ENCODE measurements at regions of chr12 and their contacts with region 1.

Region 1: DNA sequence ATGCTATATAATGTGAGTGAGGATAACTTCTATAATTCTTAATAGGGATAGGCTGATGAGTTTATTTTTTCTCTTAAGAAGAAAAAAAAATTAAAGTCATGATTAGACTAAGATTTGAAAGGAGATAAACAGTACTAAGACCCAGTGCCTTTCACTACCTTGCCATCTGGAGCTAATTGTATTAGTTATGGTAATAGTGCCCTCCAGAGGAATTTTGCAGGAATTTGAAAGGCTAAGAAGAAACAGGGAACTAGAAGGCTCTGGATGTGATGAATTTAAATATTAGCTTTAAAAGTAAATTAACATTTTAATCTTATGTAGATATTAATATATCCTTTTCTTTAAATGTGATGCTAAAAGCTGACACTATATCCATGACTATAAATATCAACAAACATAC is 36.6 kb upstream of the PIK3C2G start:
- DNase-seq: no peak
- ATAC-seq: no peak
- H3K4me3 Mint-ChIP-seq: no peak overlapping the region
- H3K27ac Mint-ChIP-seq: no peak overlapping the region
- H3K4me1 Mint-ChIP-seq: no peaks in the 10 kb centered on the region
- H3K27me3 Mint-ChIP-seq: no peaks in the 10 kb centered on the region
- CTCF ChIP-seq: no peak

Region 2: DNA sequence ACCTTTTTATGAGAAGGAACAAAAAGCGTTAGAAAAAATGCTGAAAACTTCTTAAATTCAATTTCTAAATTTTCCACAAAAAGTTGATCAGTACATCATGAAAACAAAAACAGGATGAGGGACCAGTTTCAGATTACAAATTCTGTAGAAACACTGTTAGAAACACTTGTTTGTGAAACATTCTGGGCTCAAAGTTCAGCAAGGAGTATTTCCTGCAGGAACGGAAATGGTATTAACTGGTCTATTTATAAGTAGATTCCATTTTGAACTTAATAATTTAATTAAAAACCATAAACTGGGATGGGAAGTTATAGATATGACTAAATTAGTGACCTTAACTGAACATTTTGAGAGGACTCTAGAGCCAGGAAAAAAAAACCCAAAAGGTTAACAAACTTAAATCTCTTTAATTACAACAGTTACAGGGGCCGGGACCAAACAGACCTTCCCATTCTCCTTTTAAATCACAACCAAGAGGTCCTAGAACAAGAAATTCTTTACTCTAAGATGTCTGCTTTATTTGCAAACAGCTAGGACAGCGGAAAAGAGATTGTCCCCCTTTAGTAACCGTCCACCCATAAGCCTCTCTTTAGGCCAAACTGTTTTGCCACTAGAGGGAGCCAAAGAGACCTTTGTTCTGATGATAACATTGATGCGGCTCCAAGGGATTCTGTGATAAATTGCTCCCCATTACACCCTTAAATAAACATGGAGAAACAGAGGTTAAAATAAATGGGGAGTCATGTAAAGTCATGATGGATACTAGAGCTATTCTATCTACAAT is 65.8 kb before region 1 on chr12:
- CTCF ChIA-PET with region 1: no interaction called
- POLR2A ChIA-PET with region 1: no interaction called
- intact Hi-C with region 1: loop called (anchors 2 kb)
- DNase-seq: peak; percentile 40
- ATAC-seq: peak; percentile 45
- H3K4me3 Mint-ChIP-seq: no peak overlapping the region
- H3K27ac Mint-ChIP-seq: no peak overlapping the region
- H3K4me1 Mint-ChIP-seq: no peaks in the 10 kb centered on the region
- H3K27me3 Mint-ChIP-seq: no peaks in the 10 kb centered on the region
- CTCF ChIP-seq: peak; percentile 74

Region 3: GRCh38 chr12:18206198-18206597 is 18.5 kb before region 1 on chr12:
- CTCF ChIA-PET with region 1: no interaction called
- POLR2A ChIA-PET with region 1: no interaction called
- intact Hi-C with region 1: no loop called
- DNase-seq: no peak
- ATAC-seq: no peak
- H3K4me3 Mint-ChIP-seq: no peak overlapping the region
- H3K27ac Mint-ChIP-seq: no peak overlapping the region
- H3K4me1 Mint-ChIP-seq: no peaks in the 10 kb centered on the region
- H3K27me3 Mint-ChIP-seq: no peaks in the 10 kb centered on the region
- CTCF ChIP-seq: no peak